Endothelial cell of umbilical vein (primary cell): ENCODE measurements at regions of chr17 and their contacts with region 1.

Region 1: DNA sequence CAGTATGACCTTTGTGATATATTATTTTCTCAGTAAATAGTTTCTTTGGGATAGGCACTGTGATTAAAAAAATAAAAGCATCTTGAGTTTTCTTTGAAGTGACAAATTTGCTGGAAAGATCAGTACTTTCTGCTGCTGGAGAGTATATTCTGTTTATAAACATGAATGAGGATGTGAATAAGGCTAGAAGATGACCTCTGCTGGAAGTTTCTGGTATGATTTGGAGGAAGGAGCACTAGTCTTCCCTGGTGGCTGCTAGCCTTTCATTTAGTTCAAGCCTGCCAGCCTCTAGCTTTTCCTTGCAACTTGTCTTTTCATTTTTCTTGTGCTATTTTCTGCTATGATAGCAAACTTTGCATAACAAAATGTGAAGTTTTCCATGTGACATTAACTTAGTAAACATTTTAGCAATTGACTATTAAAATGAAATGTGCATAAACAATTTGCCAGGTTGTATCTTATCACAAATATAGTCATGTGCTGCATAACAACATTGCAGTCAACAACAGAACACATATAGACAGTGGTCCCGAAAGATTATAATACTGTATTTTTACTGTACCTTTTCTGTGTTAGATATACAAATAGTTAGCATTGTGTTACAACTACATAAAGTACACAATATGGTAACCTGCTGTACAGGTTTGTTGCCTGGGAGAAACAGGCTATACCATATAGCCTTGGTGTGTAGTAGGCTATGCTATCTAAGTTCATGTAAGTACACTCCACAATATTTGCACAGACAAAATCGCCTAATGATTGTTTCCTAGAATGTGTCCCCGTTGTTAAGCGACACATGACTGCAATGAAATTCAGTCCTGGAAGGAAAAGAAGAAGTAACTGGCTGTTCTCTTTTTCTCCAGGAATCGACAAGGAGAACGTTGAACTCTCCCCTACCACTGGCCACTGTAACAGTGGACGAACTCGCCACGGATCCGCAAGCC is 18.1 kb upstream of the RAB11FIP4 start:
- DNase-seq: peak; percentile 67
- H3K4me3 ChIP-seq: no peak overlapping the region
- H3K27ac ChIP-seq: no peak overlapping the region
- H3K4me1 ChIP-seq: peaks cover 10% of the 10 kb centered on the region
- H3K27me3 ChIP-seq: no peaks in the 10 kb centered on the region
- CTCF ChIP-seq: peak; percentile 36 to 54
- POLR2A ChIP-seq: no peak

Region 2: DNA sequence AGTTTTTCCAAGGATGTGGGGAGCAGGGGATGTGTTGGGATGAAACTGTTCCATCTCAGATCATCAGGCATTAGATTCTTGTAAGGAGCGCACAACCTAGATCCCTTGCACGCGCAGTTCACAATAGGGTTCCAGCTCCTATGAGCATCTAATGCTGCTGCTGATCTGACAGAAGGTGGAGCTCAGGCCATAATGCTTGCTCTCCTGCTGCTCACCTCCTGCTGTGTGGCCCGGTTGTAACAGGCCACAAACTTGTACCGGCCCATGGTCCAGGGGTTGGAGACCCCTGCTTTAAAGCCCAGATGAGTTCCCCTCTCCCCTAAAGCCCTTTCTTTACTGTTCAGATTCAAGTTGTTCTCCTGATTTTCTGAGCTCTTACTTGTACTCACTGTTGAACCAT is 357.8 kb before region 1 on chr17:
- CTCF ChIA-PET with region 1: interaction called, 5 read pairs
- POLR2A ChIA-PET with region 1: no interaction called
- dilution Hi-C with region 1: no loop called
- intact Hi-C with region 1: loop called (anchors 2 kb)
- DNase-seq: no peak
- H3K4me3 ChIP-seq: no peak overlapping the region
- H3K27ac ChIP-seq: no peak overlapping the region
- H3K4me1 ChIP-seq: peaks cover 9% of the 10 kb centered on the region
- H3K27me3 ChIP-seq: no peaks in the 10 kb centered on the region
- CTCF ChIP-seq: no peak
- POLR2A ChIP-seq: no peak

Region 3: DNA sequence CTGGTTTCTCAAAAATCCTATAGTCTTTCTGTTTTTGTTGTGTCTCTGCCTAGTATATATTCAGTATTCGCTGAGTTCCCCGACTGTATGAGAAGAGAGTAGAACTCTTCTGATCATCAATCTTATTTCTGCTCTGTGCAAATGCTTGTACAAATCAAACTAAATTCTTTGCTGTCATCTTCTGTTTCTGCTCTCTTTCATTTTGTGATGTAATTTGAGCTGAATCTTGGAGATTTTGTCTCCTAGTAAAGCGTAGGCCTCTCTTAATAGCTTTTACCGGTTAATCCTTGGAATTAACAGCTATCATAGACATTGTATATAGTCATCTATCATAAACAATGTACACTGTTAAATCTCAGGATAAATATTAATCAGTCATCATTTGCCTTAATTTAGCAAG is 138.3 kb before region 1 on chr17:
- CTCF ChIA-PET with region 1: interaction called, 10 read pairs
- POLR2A ChIA-PET with region 1: no interaction called
- dilution Hi-C with region 1: no loop called
- intact Hi-C with region 1: loop called (anchors 5 kb)
- DNase-seq: no peak
- H3K4me3 ChIP-seq: no peak overlapping the region
- H3K27ac ChIP-seq: no peak overlapping the region
- H3K4me1 ChIP-seq: peaks cover 2% of the 10 kb centered on the region
- H3K27me3 ChIP-seq: no peaks in the 10 kb centered on the region
- CTCF ChIP-seq: no peak
- POLR2A ChIP-seq: no peak

Region 4: DNA sequence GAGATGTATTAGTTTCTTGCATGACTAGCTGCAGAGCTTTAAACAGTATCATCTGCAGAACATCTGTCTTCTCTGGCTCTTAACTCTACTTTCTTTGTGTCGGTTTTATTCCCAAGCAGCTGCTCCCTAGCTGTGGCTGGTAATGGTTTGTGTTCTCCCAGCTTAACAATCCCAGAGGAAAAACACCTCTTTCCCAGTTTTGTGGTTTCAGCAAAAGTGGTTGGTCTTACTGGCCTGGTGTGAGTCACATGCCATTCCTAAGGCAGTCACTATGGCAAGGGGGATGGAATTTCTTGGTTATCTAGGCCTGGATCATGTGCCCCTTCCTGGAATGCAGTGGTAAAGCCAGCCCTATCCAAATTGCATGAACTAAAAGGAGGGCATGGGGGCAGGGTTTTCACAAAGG is 103.8 kb before region 1 on chr17:
- CTCF ChIA-PET with region 1: interaction called, 11 read pairs
- POLR2A ChIA-PET with region 1: no interaction called
- dilution Hi-C with region 1: no loop called
- intact Hi-C with region 1: no loop called
- DNase-seq: peak; percentile 88
- H3K4me3 ChIP-seq: no peak overlapping the region
- H3K27ac ChIP-seq: peak overlapping the region; percentile 61
- H3K4me1 ChIP-seq: peaks cover 21% of the 10 kb centered on the region
- H3K27me3 ChIP-seq: no peaks in the 10 kb centered on the region
- CTCF ChIP-seq: no peak
- POLR2A ChIP-seq: no peak

Region 5: DNA sequence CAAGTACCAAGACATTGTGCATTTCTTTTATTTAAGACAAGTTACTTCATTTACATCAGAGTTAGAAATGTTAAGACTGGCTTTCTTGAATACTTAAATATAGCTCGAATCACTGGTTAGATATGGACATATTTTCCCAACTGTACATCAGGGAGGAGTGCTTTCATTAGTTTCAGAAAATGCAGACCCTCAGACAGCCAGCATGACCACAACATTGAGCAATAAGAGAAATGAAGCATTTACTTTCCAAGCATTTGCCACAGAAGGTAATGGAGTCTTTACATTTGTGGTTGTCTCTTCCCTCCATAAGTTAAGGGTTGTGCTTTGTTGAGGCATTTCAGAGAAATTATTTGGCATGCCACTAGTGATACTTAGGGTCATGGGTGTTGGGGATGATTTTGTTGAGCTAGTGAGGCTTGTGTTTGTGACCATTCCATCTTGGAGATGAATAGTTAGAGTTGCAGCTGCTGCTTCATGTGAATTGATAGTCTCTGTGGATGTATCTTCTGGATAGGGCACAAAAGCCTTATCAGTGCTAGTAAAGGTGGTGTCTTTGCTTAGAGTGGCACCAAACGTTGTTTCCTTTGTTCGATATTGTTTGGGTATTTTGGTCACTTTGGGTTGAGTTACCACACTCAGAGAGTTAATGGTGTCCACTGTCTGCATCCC is 78.5 kb before region 1 on chr17:
- CTCF ChIA-PET with region 1: no interaction called
- POLR2A ChIA-PET with region 1: no interaction called
- dilution Hi-C with region 1: no loop called
- intact Hi-C with region 1: no loop called
- DNase-seq: no peak
- H3K4me3 ChIP-seq: no peak overlapping the region
- H3K27ac ChIP-seq: no peak overlapping the region
- H3K4me1 ChIP-seq: no peaks in the 10 kb centered on the region
- H3K27me3 ChIP-seq: no peaks in the 10 kb centered on the region
- CTCF ChIP-seq: no peak
- POLR2A ChIP-seq: no peak

Region 6: GRCh38 chr17:32461853-32462617 is 1088.6 kb after region 1 on chr17:
- CTCF ChIA-PET with region 1: no interaction called
- POLR2A ChIA-PET with region 1: no interaction called
- dilution Hi-C with region 1: no loop called
- intact Hi-C with region 1: no loop called
- DNase-seq: peak; percentile 69
- H3K4me3 ChIP-seq: no peak overlapping the region
- H3K27ac ChIP-seq: no peak overlapping the region
- H3K4me1 ChIP-seq: no peaks in the 10 kb centered on the region
- H3K27me3 ChIP-seq: no peaks in the 10 kb centered on the region
- CTCF ChIP-seq: peak; percentile 59 to 67
- POLR2A ChIP-seq: no peak